HEK293T (cell line): ENCODE measurements at regions of chr5 and their contacts with region 1.

Region 1: GRCh38 chr5:181121659-181122561 is 9.1 kb downstream of the OR2V1 start:
- DNase-seq: no peak

Region 2: GRCh38 chr5:180869587-180869986 is 252.3 kb before region 1 on chr5:
- CTCF ChIA-PET with region 1: interaction called, 10 read pairs
- POLR2A ChIA-PET with region 1: no interaction called
- DNase-seq: no peak

Region 3: GRCh38 chr5:181100121-181101015 is 21.5 kb before region 1 on chr5:
- CTCF ChIA-PET with region 1: no interaction called
- POLR2A ChIA-PET with region 1: no interaction called
- DNase-seq: no peak

Region 4: GRCh38 chr5:181281077-181281983 is 159.4 kb after region 1 on chr5:
- CTCF ChIA-PET with region 1: no interaction called
- POLR2A ChIA-PET with region 1: no interaction called
- DNase-seq: no peak